B cell (primary cell): ENCODE measurements at regions of chr5 and their contacts with region 1.

Region 1: DNA sequence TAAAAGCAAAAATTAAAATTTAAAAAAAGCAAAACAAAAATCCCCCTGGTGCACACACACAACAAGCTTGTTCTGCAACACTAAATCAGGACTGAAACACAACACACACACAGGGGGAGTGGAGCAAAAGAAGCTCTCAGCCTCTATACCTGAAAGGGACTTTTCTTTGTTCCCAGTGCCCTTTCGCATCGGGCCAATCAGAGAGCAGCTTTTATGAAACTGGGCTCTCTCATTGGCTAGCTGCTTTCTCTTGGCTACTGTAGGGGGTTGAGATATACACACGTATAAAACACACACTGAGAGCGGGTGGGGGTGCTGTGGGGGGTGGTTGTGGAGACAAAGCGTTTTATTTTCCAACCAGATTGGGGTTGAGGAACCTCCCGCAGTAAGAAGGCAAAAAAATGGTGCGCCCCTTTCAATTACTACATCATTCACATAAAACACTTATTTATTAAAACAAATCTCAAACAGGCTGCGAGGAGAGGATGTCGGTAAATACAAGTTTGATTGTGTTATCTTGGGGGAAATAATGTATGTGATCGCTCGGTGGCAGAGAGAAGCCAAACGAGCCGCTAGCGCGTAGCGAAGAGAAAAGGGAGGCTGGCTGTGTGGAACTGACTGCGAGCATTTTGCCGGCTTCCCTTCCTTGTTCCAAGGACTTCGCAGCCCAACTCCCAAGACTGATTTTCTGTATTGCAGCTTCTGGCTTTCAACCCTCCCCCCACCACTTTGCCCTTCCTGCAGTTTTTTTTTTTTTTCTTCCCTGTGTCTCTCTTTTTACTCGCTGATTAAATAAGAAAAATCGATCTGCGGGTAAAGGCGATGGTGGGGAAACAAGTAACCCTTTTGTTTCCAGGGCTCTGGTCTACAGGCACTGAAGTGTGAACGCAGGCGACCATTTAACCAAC is 2.5 kb upstream of the ZNF608 start:
- DNase-seq: peak; percentile 90
- ATAC-seq: peak; percentile 68
- H3K4me3 ChIP-seq: peak overlapping the region; percentile 58 to 89 (median 72)
- H3K4me3 Mint-ChIP-seq: no peak overlapping the region
- H3K27ac ChIP-seq: peak overlapping the region; percentile 90 to 93
- H3K27ac Mint-ChIP-seq: peak overlapping the region; percentile 99
- H3K4me1 ChIP-seq: peaks cover 25 to 42% of the 10 kb centered on the region in 2 donors
- H3K4me1 Mint-ChIP-seq: peaks cover 20% of the 10 kb centered on the region
- H3K27me3 ChIP-seq: peaks cover 0 to 10% (median 0%) of the 10 kb centered on the region in 4 experiments
- H3K27me3 Mint-ChIP-seq: no peaks in the 10 kb centered on the region
- CTCF ChIP-seq: no peak

Region 2: DNA sequence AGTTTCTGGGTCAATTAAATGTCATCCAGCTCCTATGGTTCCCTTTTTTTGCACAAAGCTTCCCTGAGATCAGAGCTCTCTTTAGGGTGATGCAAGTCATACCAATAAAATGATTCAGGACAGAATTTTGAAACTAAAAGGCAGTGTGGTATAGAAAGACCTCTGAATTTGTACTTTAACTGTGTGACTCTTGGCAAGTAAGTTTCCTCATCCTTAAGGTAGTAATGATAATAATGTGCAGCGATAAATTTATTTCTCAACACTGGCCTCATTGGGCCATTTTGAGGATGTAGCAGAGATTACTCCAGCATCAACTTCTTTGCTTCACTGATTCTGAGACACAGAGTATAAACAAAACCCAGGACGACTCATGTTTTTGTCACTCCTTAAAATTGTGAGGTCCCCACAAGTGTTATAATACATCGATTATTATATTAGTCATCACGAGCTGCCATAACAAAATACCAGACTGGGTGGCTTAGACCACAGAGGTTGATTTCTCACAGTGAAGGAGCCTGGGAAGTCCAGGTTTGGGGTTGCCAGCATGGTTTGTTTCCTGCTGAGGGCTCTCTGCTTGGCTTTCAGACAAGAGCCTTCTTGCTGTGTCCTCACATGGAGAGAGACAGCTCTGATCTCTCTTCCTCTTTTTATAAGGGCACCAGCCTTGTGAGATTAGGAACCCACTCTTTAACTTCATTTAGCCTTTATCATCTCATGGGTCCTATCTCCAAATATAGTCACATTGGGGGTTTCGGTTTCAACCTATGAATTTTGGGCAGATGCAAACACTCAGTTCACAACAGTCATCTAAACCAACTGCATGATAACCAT is 295.5 kb before region 1 on chr5:
- CTCF ChIA-PET with region 1: no interaction called
- POLR2A ChIA-PET with region 1: interaction called, 3 read pairs
- intact Hi-C with region 1: loop called (anchors 10 kb)
- DNase-seq: peak; percentile 73
- ATAC-seq: peak; percentile 95
- H3K4me3 ChIP-seq: no peak overlapping the region
- H3K4me3 Mint-ChIP-seq: peak overlapping the region; percentile 80
- H3K27ac ChIP-seq: peak overlapping the region in 1 of 2 donors; percentile 22
- H3K27ac Mint-ChIP-seq: peak overlapping the region; percentile 83
- H3K4me1 ChIP-seq: peaks cover 28 to 29% of the 10 kb centered on the region in 2 donors
- H3K4me1 Mint-ChIP-seq: peaks cover 32% of the 10 kb centered on the region
- H3K27me3 ChIP-seq: no peaks in the 10 kb centered on the region
- H3K27me3 Mint-ChIP-seq: no peaks in the 10 kb centered on the region
- CTCF ChIP-seq: no peak

Region 3: GRCh38 chr5:124583469-124584350 is 165.2 kb before region 1 on chr5:
- CTCF ChIA-PET with region 1: interaction called, 5 read pairs
- POLR2A ChIA-PET with region 1: no interaction called
- intact Hi-C with region 1: loop called (anchors 1 kb)
- DNase-seq: peak; percentile 84
- ATAC-seq: peak; percentile 94
- H3K4me3 ChIP-seq: peak overlapping the region in 3 of 5 experiments; percentile 13 to 33 (median 21)
- H3K4me3 Mint-ChIP-seq: peak overlapping the region; percentile 74
- H3K27ac ChIP-seq: peak overlapping the region; percentile 56 to 60
- H3K27ac Mint-ChIP-seq: peak overlapping the region; percentile 89
- H3K4me1 ChIP-seq: peaks cover 19 to 27% of the 10 kb centered on the region in 2 donors
- H3K4me1 Mint-ChIP-seq: peaks cover 32% of the 10 kb centered on the region
- H3K27me3 ChIP-seq: no peaks in the 10 kb centered on the region
- H3K27me3 Mint-ChIP-seq: no peaks in the 10 kb centered on the region
- CTCF ChIP-seq: no peak

Region 4: DNA sequence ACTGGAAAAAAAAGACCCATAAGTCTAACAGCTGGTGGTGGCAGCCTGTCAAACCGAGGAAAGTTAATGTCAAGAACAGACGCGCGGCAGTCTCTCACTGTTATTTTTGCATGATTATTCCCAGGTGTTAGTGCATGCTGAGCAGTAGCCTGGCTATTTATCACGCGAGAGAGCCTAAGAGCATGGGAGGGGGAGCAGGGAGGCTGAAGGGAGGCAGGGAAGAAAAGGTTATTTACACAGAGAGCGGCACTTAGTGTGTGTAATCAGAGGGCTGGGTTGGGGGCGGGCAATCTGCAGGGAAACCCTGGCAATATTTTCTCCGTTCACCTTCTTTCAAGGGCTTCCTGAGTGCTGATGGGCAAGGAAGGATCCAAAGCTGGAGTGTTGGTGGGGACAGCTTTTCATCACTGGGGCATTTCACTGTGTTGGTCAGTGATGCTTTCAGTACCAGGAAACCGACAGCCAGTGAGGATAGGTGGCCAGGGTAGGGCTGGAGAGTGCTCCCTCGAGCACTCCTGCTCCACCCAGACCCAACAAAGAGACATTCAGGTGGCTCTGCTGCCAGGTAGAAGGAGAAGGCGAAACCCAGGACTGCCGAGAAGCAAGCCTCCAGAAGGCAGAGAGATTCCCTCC is 42.1 kb before region 1 on chr5:
- CTCF ChIA-PET with region 1: interaction called, 30 read pairs
- POLR2A ChIA-PET with region 1: interaction called, 12 read pairs
- intact Hi-C with region 1: loop called (anchors 1 kb)
- DNase-seq: peak; percentile 19
- ATAC-seq: no peak
- H3K4me3 ChIP-seq: peak overlapping the region in 2 of 5 experiments; percentile 24 to 30
- H3K4me3 Mint-ChIP-seq: peak overlapping the region; percentile 80
- H3K27ac ChIP-seq: peak overlapping the region; percentile 57 to 71
- H3K27ac Mint-ChIP-seq: peak overlapping the region; percentile 87
- H3K4me1 ChIP-seq: peaks cover 66 to 67% of the 10 kb centered on the region in 2 donors
- H3K4me1 Mint-ChIP-seq: peaks cover 82% of the 10 kb centered on the region
- H3K27me3 ChIP-seq: peaks cover 0 to 8% (median 0%) of the 10 kb centered on the region in 4 experiments
- H3K27me3 Mint-ChIP-seq: no peaks in the 10 kb centered on the region
- CTCF ChIP-seq: no peak

Region 5: DNA sequence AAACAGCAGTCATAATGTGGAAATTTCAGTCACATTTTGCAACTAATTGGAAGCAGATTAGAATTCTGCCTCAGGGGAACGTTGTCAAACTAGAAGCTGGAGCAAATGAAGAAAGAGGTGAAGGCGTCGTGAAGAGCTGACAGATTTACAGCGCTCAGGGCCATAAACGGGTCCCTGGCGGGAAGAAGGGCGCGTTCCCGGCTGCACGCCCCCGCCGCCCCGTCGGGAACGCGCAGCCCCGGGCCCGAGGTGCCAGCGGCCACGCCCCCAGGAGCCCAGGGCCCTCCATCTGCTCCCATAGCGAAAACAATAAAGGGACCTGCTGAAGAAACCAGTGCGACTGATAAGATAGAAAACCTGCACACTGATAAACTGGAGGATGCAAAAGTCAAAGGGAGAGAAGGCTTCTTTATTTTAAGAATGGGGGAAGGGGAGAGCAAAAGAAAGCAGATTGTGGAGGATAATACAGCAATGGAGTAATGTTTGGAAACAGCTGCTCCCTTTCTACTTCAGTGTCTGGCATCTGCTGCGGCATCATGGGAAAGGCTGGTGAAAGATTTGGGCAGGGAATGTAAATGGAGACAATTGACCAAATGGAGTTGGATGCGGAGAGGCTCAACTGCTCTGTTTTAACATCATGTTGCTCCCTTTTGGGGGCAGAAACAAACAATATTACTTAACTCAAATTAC is 13.6 kb before region 1 on chr5:
- CTCF ChIA-PET with region 1: interaction called, 12 read pairs
- POLR2A ChIA-PET with region 1: interaction called, 4 read pairs
- intact Hi-C with region 1: loop called (anchors 2 kb)
- DNase-seq: peak; percentile 40
- ATAC-seq: peak; percentile 45
- H3K4me3 ChIP-seq: peak overlapping the region; percentile 10 to 59 (median 44)
- H3K4me3 Mint-ChIP-seq: peak overlapping the region; percentile 83
- H3K27ac ChIP-seq: no peak overlapping the region
- H3K27ac Mint-ChIP-seq: peak overlapping the region; percentile 3
- H3K4me1 ChIP-seq: peaks cover 58 to 62% of the 10 kb centered on the region in 2 donors
- H3K4me1 Mint-ChIP-seq: peaks cover 74% of the 10 kb centered on the region
- H3K27me3 ChIP-seq: peaks cover 0 to 3% (median 0%) of the 10 kb centered on the region in 4 experiments
- H3K27me3 Mint-ChIP-seq: peaks cover 4% of the 10 kb centered on the region
- CTCF ChIP-seq: no peak

Region 6: GRCh38 chr5:124764992-124765611 is 16.2 kb after region 1 on chr5:
- CTCF ChIA-PET with region 1: no interaction called
- POLR2A ChIA-PET with region 1: no interaction called
- intact Hi-C with region 1: no loop called
- DNase-seq: no peak
- ATAC-seq: no peak
- H3K4me3 ChIP-seq: no peak overlapping the region
- H3K4me3 Mint-ChIP-seq: no peak overlapping the region
- H3K27ac ChIP-seq: no peak overlapping the region
- H3K27ac Mint-ChIP-seq: no peak overlapping the region
- H3K4me1 ChIP-seq: no peaks in the 10 kb centered on the region
- H3K4me1 Mint-ChIP-seq: no peaks in the 10 kb centered on the region
- H3K27me3 ChIP-seq: no peaks in the 10 kb centered on the region
- H3K27me3 Mint-ChIP-seq: no peaks in the 10 kb centered on the region
- CTCF ChIP-seq: no peak

Region 7: DNA sequence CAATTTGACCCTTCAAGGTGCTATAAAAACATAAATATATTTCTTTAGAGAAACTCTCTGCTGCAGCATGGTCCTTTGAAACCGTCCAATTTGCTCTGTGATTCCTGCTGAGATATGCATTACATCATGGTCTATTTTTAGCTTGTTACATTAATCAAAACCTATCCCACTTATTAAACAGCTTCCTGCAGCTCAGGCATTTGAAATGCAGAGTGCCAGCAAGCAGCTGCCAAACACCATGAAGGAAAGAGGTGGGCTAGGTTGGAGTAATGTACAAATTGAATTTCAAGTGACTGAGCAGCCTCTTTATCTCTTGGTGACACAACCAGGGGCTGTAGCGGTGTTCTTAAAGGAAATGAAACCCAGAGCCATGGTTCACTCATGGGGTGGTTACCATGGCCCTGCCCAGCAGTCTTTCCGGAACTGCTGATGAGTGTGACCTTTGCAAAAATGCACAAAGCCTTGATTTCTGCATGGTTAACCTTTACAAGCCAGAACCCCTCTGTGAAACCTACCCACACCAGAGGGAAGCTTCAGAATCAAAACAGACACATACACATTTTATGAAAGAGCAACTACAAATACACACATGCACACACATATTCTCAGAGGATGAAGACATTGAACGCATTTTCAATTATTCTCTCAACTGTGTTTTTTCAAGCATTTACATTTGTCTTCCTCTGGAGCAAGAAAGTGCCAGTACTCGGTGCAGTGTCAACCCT is 153.3 kb after region 1 on chr5:
- CTCF ChIA-PET with region 1: interaction called, 5 read pairs
- POLR2A ChIA-PET with region 1: interaction called, 5 read pairs
- intact Hi-C with region 1: loop called (anchors 1 kb)
- DNase-seq: peak; percentile 81
- ATAC-seq: peak; percentile 98
- H3K4me3 ChIP-seq: peak overlapping the region in 2 of 5 experiments; percentile 0 to 13
- H3K4me3 Mint-ChIP-seq: peak overlapping the region; percentile 66
- H3K27ac ChIP-seq: peak overlapping the region; percentile 58 to 70
- H3K27ac Mint-ChIP-seq: peak overlapping the region; percentile 82
- H3K4me1 ChIP-seq: peaks cover 22 to 27% of the 10 kb centered on the region in 2 donors
- H3K4me1 Mint-ChIP-seq: peaks cover 39% of the 10 kb centered on the region
- H3K27me3 ChIP-seq: no peaks in the 10 kb centered on the region
- H3K27me3 Mint-ChIP-seq: no peaks in the 10 kb centered on the region
- CTCF ChIP-seq: no peak

Region 8: DNA sequence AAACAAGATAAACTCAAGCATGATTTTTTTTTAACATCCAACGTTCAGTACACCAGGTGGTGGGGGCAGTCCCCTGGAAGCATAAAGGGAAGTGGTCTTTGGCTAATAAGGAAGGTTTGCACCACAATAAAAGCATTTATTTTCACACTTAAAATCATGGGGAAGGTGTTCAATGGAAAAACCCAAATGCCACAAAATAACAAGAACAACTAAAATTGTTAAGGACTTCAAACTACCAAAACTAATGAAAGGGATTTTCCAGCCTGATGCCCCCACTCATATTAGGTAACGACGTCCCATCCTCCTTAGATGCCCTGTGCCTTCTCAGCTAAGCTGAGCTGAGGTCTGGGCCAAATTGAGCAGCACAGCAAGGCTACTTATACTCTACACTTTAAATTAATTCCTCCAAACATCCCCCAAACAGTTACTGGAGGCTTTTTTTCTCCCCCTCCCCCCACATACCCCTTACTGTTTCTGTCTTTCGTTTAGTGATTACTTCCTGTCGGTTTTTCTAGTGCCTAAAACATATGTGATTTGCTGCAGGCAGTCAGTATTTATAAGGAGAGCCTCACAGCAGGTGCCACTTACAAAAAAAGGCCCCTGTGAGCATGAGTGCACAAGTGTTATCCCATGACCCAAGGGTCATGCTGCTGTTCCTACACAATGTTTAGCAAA is 257.2 kb after region 1 on chr5:
- CTCF ChIA-PET with region 1: interaction called, 7 read pairs
- POLR2A ChIA-PET with region 1: interaction called, 5 read pairs
- intact Hi-C with region 1: loop called (anchors 1 kb)
- DNase-seq: peak; percentile 80
- ATAC-seq: peak; percentile 67
- H3K4me3 ChIP-seq: peak overlapping the region in 3 of 5 experiments; percentile 18 to 46 (median 33)
- H3K4me3 Mint-ChIP-seq: peak overlapping the region; percentile 48
- H3K27ac ChIP-seq: peak overlapping the region; percentile 86 to 88
- H3K27ac Mint-ChIP-seq: peak overlapping the region; percentile 57
- H3K4me1 ChIP-seq: peaks cover 38 to 40% of the 10 kb centered on the region in 2 donors
- H3K4me1 Mint-ChIP-seq: peaks cover 57% of the 10 kb centered on the region
- H3K27me3 ChIP-seq: no peaks in the 10 kb centered on the region
- H3K27me3 Mint-ChIP-seq: no peaks in the 10 kb centered on the region
- CTCF ChIP-seq: no peak

Region 9: GRCh38 chr5:125160787-125161502 is 412.0 kb after region 1 on chr5:
- CTCF ChIA-PET with region 1: no interaction called
- POLR2A ChIA-PET with region 1: no interaction called
- intact Hi-C with region 1: no loop called
- DNase-seq: no peak
- ATAC-seq: no peak
- H3K4me3 ChIP-seq: no peak overlapping the region
- H3K4me3 Mint-ChIP-seq: no peak overlapping the region
- H3K27ac ChIP-seq: no peak overlapping the region
- H3K27ac Mint-ChIP-seq: no peak overlapping the region
- H3K4me1 ChIP-seq: no peaks in the 10 kb centered on the region
- H3K4me1 Mint-ChIP-seq: no peaks in the 10 kb centered on the region
- H3K27me3 ChIP-seq: no peaks in the 10 kb centered on the region
- H3K27me3 Mint-ChIP-seq: no peaks in the 10 kb centered on the region
- CTCF ChIP-seq: no peak